Posterior vena cava (tissue), 2 donors: ENCODE measurements at regions of chr4 and their contacts with region 1.

Region 1: DNA sequence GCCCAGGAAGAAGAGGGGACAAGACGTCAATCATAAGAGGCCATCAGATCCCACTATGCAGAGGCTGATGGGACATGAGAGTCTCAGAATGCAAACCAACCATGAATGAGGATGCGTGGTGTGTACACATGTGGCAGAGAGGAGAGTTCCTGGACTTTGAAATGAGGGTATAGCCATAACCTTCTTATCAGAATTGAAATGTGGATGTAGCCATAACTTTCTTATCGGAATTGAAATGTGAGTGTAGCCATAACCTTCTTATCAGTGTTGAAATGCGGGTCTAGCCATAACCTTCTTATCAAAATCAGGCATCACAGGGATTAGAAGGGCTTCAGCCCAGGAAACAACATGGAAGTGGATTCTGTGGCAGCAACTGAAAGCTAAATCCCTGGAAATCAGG is 415.5 kb upstream of the FAT1 start:
- DNase-seq: no peak

Region 2: GRCh38 chr4:187158003-187158402 is 18.9 kb after region 1 on chr4:
- intact Hi-C with region 1: no loop called
- DNase-seq: no peak

Region 3: DNA sequence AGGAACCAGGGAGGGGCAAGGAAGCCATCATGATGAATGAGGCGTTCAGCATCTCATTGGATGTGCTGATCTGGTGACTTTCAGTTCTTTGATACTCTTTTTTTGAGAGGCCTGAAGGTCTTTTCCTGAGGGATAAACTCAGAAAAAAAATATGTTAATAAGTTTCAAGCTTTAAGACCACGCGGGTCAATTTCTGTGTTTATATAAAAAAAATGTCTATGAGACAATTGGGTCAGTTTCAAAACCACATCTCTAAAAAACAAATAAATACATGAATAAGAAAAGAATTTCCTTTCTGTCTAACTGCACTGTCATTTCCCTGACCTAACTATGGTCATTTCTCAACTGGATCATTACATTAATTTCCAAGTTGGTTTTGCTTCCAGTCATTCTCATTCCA is 1062.7 kb after region 1 on chr4:
- intact Hi-C with region 1: loop called in 1 of 2 experiments (anchors 5 kb)
- DNase-seq: no peak